Activated CD8-positive, alpha-beta memory T cell treated with anti-CD3 and anti-CD28 coated beads, Interleukin-2, amount 10 ng/mL, durations not matched to agents 7 days and 5 days (primary cell): ENCODE measurements at regions of chr12 and their contacts with region 1.

Region 1: GRCh38 chr12:56189176-56189917 is at the start of gene SMARCC2:
- DNase-seq: peak; percentile 90
- ATAC-seq: peak; percentile 85
- H3K4me3 Mint-ChIP-seq: peak within 1 kb of the TSS; percentile 95
- H3K27ac Mint-ChIP-seq: peak within 1 kb of the TSS; percentile 97
- H3K4me1 Mint-ChIP-seq: peaks cover 46% of the 10 kb centered on the region
- H3K27me3 Mint-ChIP-seq: no peaks in the 10 kb centered on the region
- total RNA-seq, gene SMARCC2: 147 to 150 TPM

Region 2: DNA sequence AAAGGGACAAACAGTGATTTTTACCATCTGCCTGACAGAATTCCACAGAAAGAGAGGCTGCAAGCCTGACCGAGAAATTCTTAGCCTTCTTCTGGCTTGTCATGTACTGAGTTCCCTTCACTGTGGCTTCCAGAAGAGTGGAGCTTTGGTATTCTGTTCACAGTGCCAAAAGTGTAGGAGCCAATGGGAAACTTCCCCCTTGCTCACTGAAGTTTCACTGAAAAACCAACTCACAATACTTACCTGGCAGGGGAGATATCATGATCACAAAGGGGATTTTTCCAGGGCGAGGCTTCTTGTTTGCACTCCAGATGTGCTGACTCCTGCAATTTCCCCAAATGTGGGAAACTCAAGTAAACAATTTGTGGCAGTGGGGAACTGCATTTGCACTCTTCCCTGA is 314.9 kb before region 1 on chr12:
- CTCF ChIA-PET with region 1: no interaction called
- DNase-seq: no peak
- ATAC-seq: no peak
- H3K4me3 Mint-ChIP-seq: no peak overlapping the region
- H3K27ac Mint-ChIP-seq: no peak overlapping the region
- H3K4me1 Mint-ChIP-seq: peaks cover 2% of the 10 kb centered on the region
- H3K27me3 Mint-ChIP-seq: no peaks in the 10 kb centered on the region

Region 3: DNA sequence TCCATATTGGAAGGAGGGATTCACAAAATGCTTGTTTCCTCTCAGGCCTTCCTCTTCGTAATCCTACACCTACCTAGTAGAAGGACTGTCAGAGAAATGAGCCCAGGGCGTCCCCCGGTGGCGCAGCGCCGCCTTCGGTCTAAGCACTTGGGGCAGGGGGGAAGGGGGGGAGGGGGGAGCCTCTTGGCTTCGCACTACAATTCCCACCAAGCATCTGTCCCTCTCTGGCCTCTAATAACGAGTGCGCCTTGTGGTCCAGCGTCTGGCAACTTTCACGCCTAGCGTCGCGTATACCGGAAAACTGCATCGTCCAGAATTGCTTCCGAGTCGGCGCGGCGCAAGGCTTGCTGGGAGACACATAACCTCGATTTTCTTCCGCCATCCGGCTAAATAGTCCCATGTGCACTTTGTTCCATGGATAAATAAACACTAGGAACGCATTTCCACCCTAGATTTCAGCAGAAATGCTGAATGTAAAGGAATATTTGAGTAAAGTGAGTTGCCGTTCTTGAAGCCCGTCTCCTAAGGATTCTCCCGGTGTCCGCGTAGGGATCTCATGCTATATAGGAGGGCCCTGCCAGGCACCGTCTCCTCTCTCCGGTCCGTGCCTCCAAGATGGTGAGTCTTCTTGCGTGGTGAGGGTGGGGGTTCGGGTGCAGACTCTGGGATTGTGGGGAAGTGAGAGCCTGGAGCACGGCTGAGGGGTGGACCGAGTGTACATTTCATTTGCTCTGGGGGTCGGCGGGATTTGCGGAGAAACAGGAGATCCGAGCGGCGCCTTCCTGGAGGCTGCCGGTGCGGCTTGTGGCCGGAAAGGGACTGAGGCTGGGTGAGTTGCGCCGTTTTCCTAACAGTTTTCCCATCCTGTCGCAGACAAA is 147.6 kb before region 1 on chr12 and contains the start of gene RPS26:
- CTCF ChIA-PET with region 1: interaction called, 16 read pairs
- DNase-seq: peak; percentile 97
- ATAC-seq: peak; percentile 91
- H3K4me3 Mint-ChIP-seq: peak within 1 kb of the TSS; percentile 93
- H3K27ac Mint-ChIP-seq: peak within 1 kb of the TSS; percentile 97
- H3K4me1 Mint-ChIP-seq: peaks cover 53% of the 10 kb centered on the region
- H3K27me3 Mint-ChIP-seq: no peaks in the 10 kb centered on the region
- total RNA-seq, gene RPS26: 27.9 to 42.2 TPM

Region 4: DNA sequence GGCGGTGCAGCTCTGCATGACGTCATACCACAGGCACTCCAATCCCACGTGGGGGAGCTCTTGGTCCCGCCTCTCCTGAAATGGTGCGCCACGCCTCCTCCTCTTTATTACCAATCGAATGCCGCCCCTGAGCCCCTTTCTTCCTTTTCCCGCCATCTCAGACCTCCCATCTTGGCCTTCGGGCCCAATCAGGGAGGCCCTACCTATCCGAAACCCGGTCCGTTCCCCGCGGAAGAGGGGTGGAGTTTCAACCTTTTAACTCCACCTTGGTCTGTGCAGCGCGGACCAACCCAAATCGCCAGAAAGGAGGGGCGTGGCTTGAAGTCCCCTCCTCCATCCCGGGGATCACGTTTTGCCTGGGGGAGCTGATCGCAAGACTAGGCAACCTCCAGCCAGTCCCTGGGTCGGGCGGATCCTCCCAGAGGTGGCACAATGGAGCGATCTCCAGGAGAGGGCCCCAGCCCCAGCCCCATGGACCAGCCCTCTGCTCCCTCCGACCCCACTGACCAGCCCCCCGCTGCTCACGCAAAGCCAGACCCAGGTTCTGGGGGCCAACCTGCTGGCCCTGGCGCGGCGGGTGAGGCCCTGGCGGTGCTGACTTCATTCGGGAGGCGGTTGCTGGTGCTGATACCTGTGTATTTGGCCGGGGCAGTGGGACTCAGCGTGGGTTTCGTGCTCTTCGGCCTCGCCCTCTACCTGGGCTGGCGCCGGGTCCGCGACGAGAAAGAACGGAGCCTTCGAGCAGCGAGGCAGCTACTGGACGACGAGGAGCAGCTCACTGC is 61.3 kb before region 1 on chr12 and contains the start of gene ESYT1:
- CTCF ChIA-PET with region 1: interaction called, 151 read pairs
- DNase-seq: peak; percentile 100
- ATAC-seq: peak; percentile 91
- H3K4me3 Mint-ChIP-seq: peak within 1 kb of the TSS; percentile 98
- H3K27ac Mint-ChIP-seq: peak within 1 kb of the TSS; percentile 93
- H3K4me1 Mint-ChIP-seq: peaks cover 66% of the 10 kb centered on the region
- H3K27me3 Mint-ChIP-seq: no peaks in the 10 kb centered on the region
- total RNA-seq, gene ESYT1: 225 to 241 TPM

Region 5: GRCh38 chr12:56158029-56158925 is 31.1 kb before region 1 on chr12 and contains the start of gene MYL6:
- CTCF ChIA-PET with region 1: interaction called, 20 read pairs
- DNase-seq: peak; percentile 98
- ATAC-seq: peak; percentile 85
- H3K4me3 Mint-ChIP-seq: peak within 1 kb of the TSS; percentile 94
- H3K27ac Mint-ChIP-seq: peak within 1 kb of the TSS; percentile 96
- H3K4me1 Mint-ChIP-seq: peaks cover 51% of the 10 kb centered on the region
- H3K27me3 Mint-ChIP-seq: no peaks in the 10 kb centered on the region
- total RNA-seq, gene MYL6: 1,307 to 1,412 TPM

Region 6: GRCh38 chr12:56224102-56224701 is 34.9 kb after region 1 on chr12 and contains the start of gene NABP2:
- CTCF ChIA-PET with region 1: interaction called, 57 read pairs
- DNase-seq: peak; percentile 97
- ATAC-seq: peak; percentile 85
- H3K4me3 Mint-ChIP-seq: peak within 1 kb of the TSS; percentile 97
- H3K27ac Mint-ChIP-seq: peak within 1 kb of the TSS; percentile 75
- H3K4me1 Mint-ChIP-seq: peaks cover 42% of the 10 kb centered on the region
- H3K27me3 Mint-ChIP-seq: no peaks in the 10 kb centered on the region
- total RNA-seq, gene NABP2: 62.8 to 80.6 TPM

Region 7: GRCh38 chr12:56237552-56237951 is 48.2 kb after region 1 on chr12:
- CTCF ChIA-PET with region 1: no interaction called
- DNase-seq: no peak
- ATAC-seq: no peak
- H3K4me3 Mint-ChIP-seq: no peak overlapping the region
- H3K27ac Mint-ChIP-seq: no peak overlapping the region
- H3K4me1 Mint-ChIP-seq: no peaks in the 10 kb centered on the region
- H3K27me3 Mint-ChIP-seq: no peaks in the 10 kb centered on the region

Region 8: DNA sequence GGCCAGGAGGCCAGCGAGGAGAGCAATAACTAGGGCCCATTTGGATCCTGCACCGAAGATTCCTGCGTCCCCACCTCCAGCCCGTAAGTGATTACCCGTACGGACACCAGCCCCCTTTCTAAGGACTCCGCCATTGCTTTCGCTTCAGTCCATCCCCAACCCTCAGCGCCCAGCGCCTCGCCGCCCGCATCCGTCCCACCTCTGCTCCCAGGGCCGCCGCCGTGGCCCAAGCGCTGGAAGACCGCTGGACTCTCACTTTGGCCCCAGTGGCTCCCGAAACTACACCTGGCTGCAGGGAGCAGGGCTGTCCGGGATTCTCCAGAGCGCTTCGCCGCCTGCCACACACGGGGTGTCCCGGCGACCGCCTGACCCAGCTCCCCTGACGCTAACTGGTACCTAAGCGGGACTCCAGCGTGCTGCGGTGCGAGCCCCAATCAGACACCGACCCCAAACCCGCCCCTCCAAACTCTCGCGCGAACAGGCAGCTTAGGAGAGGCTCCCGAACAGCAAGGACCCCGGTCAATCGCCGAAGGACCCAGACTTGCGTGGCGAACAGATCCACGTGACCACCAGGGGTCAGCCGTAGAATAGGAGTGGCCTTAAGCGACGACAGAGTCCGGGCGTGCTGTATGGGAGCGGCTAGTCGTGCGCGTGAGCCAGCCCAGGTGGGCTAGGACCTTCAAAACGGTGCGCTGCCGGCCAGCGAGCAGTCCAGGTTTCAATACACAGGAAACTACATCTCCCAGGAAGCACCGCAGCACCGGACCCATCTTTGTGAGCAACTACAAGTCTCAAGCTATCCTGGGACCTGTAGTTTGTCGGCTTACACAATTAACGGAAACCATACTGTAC is 126.5 kb after region 1 on chr12 and contains the start of gene CNPY2:
- CTCF ChIA-PET with region 1: interaction called, 14 read pairs
- DNase-seq: peak; percentile 98
- ATAC-seq: peak; percentile 93
- H3K4me3 Mint-ChIP-seq: peak within 1 kb of the TSS; percentile 98
- H3K27ac Mint-ChIP-seq: peak within 1 kb of the TSS; percentile 98
- H3K4me1 Mint-ChIP-seq: peaks cover 20% of the 10 kb centered on the region
- H3K27me3 Mint-ChIP-seq: no peaks in the 10 kb centered on the region
- total RNA-seq, gene CNPY2: 110 to 161 TPM

Region 9: DNA sequence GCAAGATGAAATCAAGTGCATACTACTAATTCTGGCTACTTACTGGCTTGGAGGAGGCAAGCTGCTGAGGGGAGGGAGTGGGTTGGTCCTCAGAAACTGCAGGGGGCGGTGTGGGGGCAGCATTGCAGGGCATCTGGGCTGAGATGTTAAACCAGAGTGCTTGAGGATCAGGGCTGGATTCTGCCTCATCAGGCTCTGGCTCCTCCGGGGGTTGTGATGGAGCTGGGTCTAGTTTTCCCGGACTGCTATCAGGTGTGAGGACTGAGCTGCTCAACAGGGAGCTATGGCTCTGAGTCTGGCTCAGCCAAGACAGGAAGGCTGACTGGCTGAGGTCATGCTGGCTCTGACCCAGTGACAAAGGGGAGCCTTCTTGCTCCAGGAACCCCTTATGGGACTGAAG is 412.2 kb after region 1 on chr12:
- CTCF ChIA-PET with region 1: no interaction called
- DNase-seq: peak; percentile 56
- ATAC-seq: peak; percentile 37
- H3K4me3 Mint-ChIP-seq: no peak overlapping the region
- H3K27ac Mint-ChIP-seq: no peak overlapping the region
- H3K4me1 Mint-ChIP-seq: no peaks in the 10 kb centered on the region
- H3K27me3 Mint-ChIP-seq: no peaks in the 10 kb centered on the region